Head of caudate nucleus (tissue), 42 donors: ENCODE measurements at regions of chr10 and their contacts with region 1.

Region 1: DNA sequence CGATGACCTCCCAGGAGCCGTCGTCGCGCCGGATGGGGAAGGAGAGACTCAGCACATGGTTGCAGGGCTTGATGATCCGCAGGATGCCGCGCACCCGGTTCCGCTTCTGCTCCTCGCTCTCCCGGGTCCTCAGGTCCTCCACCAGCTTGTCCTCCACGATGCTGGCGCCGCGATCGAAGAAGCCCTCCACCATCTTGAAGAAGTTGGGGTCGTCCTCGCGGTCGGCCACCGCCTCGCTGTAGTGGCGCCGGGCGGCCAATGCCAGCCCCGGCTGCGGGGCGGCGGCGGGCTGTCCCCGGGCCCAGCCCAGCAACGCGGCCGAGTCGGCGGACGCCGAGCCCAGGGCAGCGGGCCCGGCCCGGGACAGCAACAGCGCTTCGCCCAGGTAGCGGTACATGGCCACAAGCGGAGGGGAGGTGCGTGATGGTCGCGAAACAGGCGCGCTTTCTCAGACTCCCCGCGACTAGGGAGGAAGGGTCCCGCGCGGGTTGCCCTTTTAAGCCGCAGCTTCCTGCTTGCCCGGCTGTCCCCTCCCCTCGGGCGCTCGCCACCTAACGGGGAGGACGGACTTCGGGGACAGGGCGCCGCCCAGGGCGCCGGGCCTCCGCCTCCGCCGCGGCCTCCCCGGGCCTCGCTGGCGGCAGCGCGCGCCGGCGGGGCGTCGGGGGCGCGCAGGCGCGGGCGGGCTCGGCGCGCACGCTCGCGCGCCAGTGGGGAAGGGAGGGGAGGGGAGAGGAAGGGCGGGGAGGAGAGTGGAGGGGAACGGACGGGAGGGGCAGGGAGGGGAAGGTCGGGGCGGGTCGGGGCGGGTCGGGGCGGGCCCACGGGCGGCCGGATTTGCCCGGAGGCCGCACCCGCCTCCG is at the starts of genes GLUD1 and SHLD2:
- DNase-seq: peak; percentile 65 to 95 (median 89)

Region 2: DNA sequence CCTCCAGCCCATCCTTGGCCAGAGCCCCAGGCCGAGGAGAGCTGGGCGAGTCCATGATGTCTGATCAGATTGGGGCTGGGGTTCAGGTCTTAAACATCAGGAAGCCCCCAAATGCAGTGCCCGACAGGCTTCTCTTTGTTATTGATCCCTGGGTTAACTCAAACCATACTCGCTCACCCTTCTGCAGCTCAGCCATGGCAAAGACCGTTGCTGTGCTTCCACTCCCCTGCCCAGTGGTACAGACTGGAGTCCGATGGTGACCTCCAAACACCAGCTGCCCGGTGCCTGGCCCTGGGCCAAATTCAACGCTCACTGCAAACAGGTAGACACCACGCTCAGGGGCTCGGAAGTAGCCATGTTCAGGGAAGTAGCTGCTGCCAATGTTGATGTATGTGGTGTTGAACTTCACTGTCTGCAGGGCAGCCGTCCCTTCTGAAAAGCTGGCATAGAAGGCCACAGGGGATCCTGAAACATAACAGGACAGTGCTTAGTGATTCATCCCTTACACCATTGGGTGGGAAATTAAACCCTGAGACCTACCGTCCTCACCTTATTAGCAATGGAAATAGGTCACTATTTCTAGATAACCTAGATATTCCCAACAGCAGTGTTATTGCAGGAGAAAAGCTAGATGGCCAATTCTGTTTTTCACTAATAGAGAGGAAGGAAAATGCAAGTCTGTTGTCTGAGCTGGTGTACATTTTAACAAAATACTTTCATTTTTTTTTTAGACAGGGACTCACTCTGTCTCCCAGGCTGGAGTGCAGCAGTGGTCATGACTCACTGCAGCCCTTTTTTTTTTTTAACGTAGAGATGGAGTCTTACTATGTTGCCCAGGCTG is 157.7 kb before region 1 on chr10:
- intact Hi-C with region 1: loop called (anchors 10 kb)
- DNase-seq: peak in 3 of 42 donors; percentile 18 to 51 (median 45)

Region 3: GRCh38 chr10:87054373-87055295 is 40.0 kb before region 1 on chr10:
- intact Hi-C with region 1: loop called (anchors 5 kb)
- DNase-seq: no peak